ENCODE measurements at regions of chr7 and their contacts with region 1.

Region 1: GRCh38 chr7:149414745-149415390 is 46.0 kb downstream of the ZNF777 start:
- DNase-seq: peak; percentile 57 to 60
- H3K4me3 ChIP-seq: peak overlapping the region in 1 of 3 donors; percentile 2
- H3K27ac ChIP-seq: no peak overlapping the region
- H3K4me1 ChIP-seq: no peaks in the 10 kb centered on the region
- H3K27me3 ChIP-seq: no peaks in the 10 kb centered on the region
- CTCF ChIP-seq: no peak
- POLR2A ChIP-seq: no peak

Region 2: GRCh38 chr7:149381245-149381644 is 33.6 kb before region 1 on chr7:
- intact Hi-C with region 1: no loop called
- DNase-seq: no peak
- H3K4me3 ChIP-seq: no peak overlapping the region
- H3K27ac ChIP-seq: no peak overlapping the region
- H3K4me1 ChIP-seq: no peaks in the 10 kb centered on the region
- H3K27me3 ChIP-seq: no peaks in the 10 kb centered on the region
- CTCF ChIP-seq: no peak
- POLR2A ChIP-seq: no peak

Region 3: DNA sequence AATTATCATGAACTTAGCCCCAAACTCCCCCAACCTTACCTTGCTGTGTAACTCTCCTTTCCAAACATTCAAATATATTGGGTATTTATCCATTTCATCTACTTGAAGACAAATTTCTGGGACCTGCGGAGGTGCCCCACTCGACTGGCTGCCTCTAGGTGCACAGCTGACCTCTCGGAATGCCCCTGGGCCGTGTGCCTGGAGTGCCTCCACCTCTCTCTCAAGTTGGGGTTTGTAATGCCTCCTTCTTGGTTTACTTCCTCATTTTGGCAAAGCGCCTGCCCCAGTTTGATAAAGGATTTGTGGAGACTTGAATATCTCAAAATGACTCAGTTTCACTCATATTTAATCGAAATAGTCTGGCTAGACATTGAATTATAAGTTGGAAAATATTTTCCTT is 29.4 kb after region 1 on chr7:
- intact Hi-C with region 1: no loop called
- DNase-seq: no peak
- H3K4me3 ChIP-seq: no peak overlapping the region
- H3K27ac ChIP-seq: no peak overlapping the region
- H3K4me1 ChIP-seq: no peaks in the 10 kb centered on the region
- H3K27me3 ChIP-seq: no peaks in the 10 kb centered on the region
- CTCF ChIP-seq: no peak
- POLR2A ChIP-seq: no peak

Region 4: GRCh38 chr7:149624419-149625339 is 209.8 kb after region 1 on chr7:
- intact Hi-C with region 1: loop called (anchors 10 kb)
- DNase-seq: peak; percentile 92 to 94
- H3K4me3 ChIP-seq: peak overlapping the region; percentile 89 to 98 (median 89)
- H3K27ac ChIP-seq: peak overlapping the region; percentile 76 to 91 (median 87)
- H3K4me1 ChIP-seq: peaks cover 8 to 23% of the 10 kb centered on the region in 2 donors
- H3K27me3 ChIP-seq: no peaks in the 10 kb centered on the region
- CTCF ChIP-seq: peak; percentile 33 to 100 (median 96)
- POLR2A ChIP-seq: peak in 1 of 2 donors; percentile 82

Measured in thyroid gland (tissue), 4 donors.